Posterior vena cava (tissue), 2 donors: ENCODE measurements at regions of chr2 and their contacts with region 1.

Region 1: GRCh38 chr2:41337956-41338355 is 709.9 kb upstream of the PKDCC start:
- DNase-seq: no peak

Region 2: DNA sequence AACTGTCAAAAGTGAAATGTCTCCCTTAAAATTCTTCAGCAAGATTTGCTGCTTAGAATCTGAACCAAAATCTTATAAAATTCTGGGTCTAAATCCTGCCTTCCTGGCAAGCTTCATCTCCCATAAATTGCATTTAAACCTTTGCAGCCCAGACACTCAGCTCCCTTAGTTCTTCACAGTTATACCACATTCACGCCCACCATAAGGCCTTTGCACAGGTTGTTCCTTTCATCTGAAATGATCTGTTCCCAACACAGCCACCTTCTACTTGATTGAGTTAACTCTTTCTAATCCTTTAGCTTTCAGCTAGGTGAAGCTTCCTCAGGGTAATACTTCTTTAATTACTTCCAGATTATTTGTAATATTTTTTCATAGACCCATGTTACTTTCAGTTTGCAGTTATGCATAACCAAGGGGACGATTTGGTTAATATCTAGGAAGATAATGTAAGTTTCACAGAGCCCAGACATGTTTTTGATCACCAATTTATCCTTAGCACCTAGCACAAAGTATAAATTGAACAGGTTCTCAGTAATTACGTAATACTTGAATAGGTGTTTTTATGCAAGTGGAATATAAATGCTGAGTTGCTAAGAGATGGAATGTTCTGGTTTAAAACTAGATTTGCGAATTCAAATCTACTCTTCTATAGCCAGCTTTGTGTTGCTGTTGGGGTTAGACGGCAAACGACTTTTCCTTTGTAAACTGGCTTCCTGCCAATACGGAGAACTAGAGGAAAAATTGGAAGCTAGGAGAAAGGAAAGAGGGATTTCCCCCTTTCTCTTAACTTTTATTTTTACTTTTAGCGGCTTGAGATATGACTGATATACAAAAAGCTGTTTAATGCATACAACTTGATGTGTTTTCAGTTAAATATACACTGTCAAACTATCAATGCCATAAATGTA is 69.8 kb before region 1 on chr2:
- intact Hi-C with region 1: no loop called
- DNase-seq: no peak

Region 3: DNA sequence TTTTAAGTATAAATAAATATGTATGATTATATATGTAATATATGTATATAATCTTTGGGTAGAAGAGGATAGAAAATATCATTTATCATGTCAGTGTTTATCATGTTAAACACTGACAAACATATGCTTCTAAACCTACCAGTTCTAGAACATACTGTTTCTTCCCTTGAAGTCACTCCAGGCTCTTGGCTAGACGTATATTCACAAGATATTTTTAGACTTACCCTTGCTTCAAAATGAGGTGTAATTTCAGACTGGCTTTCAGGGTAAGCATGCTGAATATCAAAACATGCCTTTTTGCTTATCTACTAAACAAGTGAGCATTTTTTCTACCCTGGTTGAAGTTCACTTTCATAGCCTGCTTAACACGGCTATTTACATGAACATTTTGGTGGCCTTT is 67.5 kb after region 1 on chr2:
- intact Hi-C with region 1: loop called in 1 of 2 experiments (anchors 2 kb)
- DNase-seq: no peak